Gastrocnemius medialis (tissue), 4 donors: ENCODE measurements at regions of chr13 and their contacts with region 1.

Region 1: GRCh38 chr13:47117268-47117667 is 220.4 kb upstream of the HTR2A start:
- DNase-seq: no peak
- ATAC-seq: no peak
- H3K4me3 ChIP-seq: no peak overlapping the region
- H3K27ac ChIP-seq: no peak overlapping the region
- H3K4me1 ChIP-seq: no peaks in the 10 kb centered on the region
- H3K27me3 ChIP-seq: no peaks in the 10 kb centered on the region
- CTCF ChIP-seq: no peak
- POLR2A ChIP-seq: no peak

Region 2: DNA sequence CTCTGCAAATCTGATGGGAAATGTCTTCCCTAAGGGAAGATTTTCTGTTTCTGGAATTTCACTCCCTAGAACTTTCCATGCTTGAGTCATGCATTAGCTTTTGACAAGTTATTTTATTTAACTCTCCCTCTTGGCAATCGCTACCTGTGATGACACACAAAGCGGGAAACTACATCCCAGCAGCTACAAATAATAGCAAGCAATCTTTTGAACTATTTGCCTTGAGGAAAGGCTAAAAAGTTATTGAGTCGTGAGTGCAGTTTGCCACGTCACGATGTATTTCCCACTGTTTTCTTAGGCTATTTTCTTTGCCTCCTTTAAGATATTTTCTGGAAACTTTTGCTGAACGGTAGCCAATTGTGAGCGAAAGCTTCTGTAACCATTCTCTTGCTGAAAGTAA is 132.9 kb after region 1 on chr13:
- in situ Hi-C with region 1: no loop called
- intact Hi-C with region 1: no loop called
- DNase-seq: no peak
- ATAC-seq: no peak
- H3K4me3 ChIP-seq: no peak overlapping the region
- H3K27ac ChIP-seq: no peak overlapping the region
- H3K4me1 ChIP-seq: no peaks in the 10 kb centered on the region
- H3K27me3 ChIP-seq: no peaks in the 10 kb centered on the region
- CTCF ChIP-seq: no peak
- POLR2A ChIP-seq: no peak

Region 3: DNA sequence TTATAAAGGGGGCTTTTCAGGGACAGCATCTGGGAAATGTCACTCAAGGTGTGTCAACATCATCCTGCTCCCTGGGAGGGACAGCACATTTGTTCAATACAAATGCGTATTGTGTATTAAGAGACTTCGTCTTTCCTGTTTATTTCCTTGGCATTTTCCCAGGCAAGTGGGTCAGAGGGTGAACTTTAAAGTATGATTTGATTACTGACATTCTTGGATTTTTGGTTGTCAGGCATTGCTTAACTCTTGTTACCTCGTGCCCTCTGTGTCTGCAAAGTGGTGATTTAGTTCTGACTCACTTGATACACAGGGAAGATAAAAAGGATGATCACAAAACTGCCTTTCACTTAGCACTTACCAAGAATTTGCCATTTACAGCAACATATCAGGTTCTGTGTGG is 591.1 kb after region 1 on chr13:
- in situ Hi-C with region 1: no loop called
- intact Hi-C with region 1: loop called (anchors 5 kb)
- DNase-seq: no peak
- ATAC-seq: no peak
- H3K4me3 ChIP-seq: no peak overlapping the region
- H3K27ac ChIP-seq: no peak overlapping the region
- H3K4me1 ChIP-seq: no peaks in the 10 kb centered on the region
- H3K27me3 ChIP-seq: no peaks in the 10 kb centered on the region
- CTCF ChIP-seq: no peak
- POLR2A ChIP-seq: no peak